ENCODE measurements at regions of chr14 and their contacts with region 1.

Region 1: GRCh38 chr14:24146978-24147760 is at the start of gene RNF31:
- DNase-seq: peak; percentile 92
- ATAC-seq: peak; percentile 93
- H3K4me3 ChIP-seq: peak within 1 kb of the TSS; percentile 82
- H3K27ac ChIP-seq: peak within 1 kb of the TSS; percentile 94
- H3K4me1 ChIP-seq: peaks cover 11% of the 10 kb centered on the region
- H3K27me3 ChIP-seq: no peaks in the 10 kb centered on the region
- CTCF ChIP-seq: no peak
- EP300 ChIP-seq: no peak
- POLR2A ChIP-seq: peak; percentile 28
- RAD21 ChIP-seq: no peak
- polyA plus RNA-seq, gene RNF31: 8.5 to 19.0 TPM

Region 2: GRCh38 chr14:24080888-24081738 is 66.1 kb before region 1 on chr14:
- CTCF ChIA-PET with region 1: interaction called, 4 read pairs
- POLR2A ChIA-PET with region 1: interaction called, 10 read pairs
- RAD21 ChIA-PET with region 1: no interaction called
- SMC1A ChIA-PET with region 1: no interaction called
- in situ Hi-C with region 1: no loop called
- intact Hi-C with region 1: no loop called
- DNase-seq: no peak
- ATAC-seq: peak; percentile 95
- H3K4me3 ChIP-seq: peak overlapping the region; percentile 63; the same call in 1 of the 2 replicates
- H3K27ac ChIP-seq: peak overlapping the region; percentile 67
- H3K4me1 ChIP-seq: peaks cover 14% of the 10 kb centered on the region
- H3K27me3 ChIP-seq: no peaks in the 10 kb centered on the region
- CTCF ChIP-seq: no peak
- EP300 ChIP-seq: no peak
- POLR2A ChIP-seq: peak; percentile 77
- RAD21 ChIP-seq: no peak

Region 3: DNA sequence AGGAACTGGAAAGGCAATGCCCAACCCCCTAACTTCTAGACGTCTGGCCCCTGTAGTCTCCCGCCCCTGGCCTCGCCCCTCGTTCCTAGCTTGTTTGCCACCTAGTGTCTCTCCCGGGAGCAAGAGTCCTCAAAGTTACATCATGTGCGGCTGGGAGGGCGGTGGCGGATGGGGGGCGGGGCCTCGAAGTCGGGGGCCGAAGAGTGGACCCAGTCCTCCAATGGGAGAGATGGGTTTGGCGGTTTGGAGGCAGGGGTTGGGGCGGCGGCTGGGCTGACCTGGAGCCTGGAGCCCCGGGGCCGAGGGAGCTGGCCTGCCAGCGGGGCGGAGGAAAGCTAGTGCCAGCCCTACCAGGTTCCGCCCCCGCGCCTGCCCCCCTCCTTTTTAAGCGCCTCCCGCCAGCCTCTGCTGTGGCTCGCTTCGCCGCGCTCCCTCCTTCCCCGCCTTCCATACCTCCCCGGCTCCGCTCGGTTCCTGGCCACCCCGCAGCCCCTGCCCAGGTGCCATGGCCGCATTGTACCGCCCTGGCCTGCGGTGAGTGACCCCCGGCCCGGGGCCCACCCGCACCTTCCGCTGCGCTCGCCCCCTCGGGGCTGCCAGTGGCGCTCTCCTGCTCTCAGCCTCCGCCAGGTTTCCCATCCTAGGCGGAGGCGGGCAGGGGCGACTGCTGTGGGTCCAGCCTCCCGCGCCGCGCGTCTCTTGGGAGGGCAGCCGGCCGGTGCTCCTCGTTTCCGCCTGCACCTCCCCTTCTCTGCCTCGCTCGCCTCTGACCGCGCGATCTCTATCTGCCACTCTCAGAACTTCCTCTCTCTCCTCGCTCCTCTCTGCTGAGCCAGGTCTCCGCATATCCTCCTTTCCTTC is 53.0 kb before region 1 on chr14 and contains the start of gene PCK2:
- CTCF ChIA-PET with region 1: interaction called, 9 read pairs
- POLR2A ChIA-PET with region 1: interaction called, 38 read pairs
- RAD21 ChIA-PET with region 1: interaction called, 22 read pairs
- SMC1A ChIA-PET with region 1: interaction called, 18 read pairs
- in situ Hi-C with region 1: no loop called
- intact Hi-C with region 1: no loop called
- DNase-seq: no peak
- ATAC-seq: peak; percentile 79
- H3K4me3 ChIP-seq: peak within 1 kb of the TSS; percentile 98
- H3K27ac ChIP-seq: peak within 1 kb of the TSS; percentile 99
- H3K4me1 ChIP-seq: 0 out of 2 replicates have a peak, but pooled peaks cover 3% of the 10 kb centered on the region
- H3K27me3 ChIP-seq: no peaks in the 10 kb centered on the region
- CTCF ChIP-seq: no peak
- EP300 ChIP-seq: no peak
- POLR2A ChIP-seq: peak; percentile 91
- RAD21 ChIP-seq: no peak
- polyA plus RNA-seq, gene PCK2: 6.6 to 12.3 TPM

Region 4: GRCh38 chr14:24123508-24124417 is 23.4 kb before region 1 on chr14:
- CTCF ChIA-PET with region 1: no interaction called
- POLR2A ChIA-PET with region 1: interaction called, 12 read pairs
- RAD21 ChIA-PET with region 1: interaction called, 3 read pairs
- SMC1A ChIA-PET with region 1: interaction called, 4 read pairs
- in situ Hi-C with region 1: no loop called
- intact Hi-C with region 1: no loop called
- DNase-seq: no peak
- ATAC-seq: peak; percentile 92
- H3K4me3 ChIP-seq: no peak overlapping the region
- H3K27ac ChIP-seq: peak overlapping the region; percentile 78
- H3K4me1 ChIP-seq: peaks cover 25% of the 10 kb centered on the region
- H3K27me3 ChIP-seq: no peaks in the 10 kb centered on the region
- CTCF ChIP-seq: no peak
- EP300 ChIP-seq: no peak
- POLR2A ChIP-seq: peak; percentile 43; the same call in 1 of the 2 replicates
- RAD21 ChIP-seq: no peak

Region 5: GRCh38 chr14:24135834-24136542 is 11.2 kb before region 1 on chr14 and contains the start of gene PSME1:
- CTCF ChIA-PET with region 1: interaction called, 16 read pairs
- POLR2A ChIA-PET with region 1: interaction called, 84 read pairs
- RAD21 ChIA-PET with region 1: interaction called, 37 read pairs
- SMC1A ChIA-PET with region 1: interaction called, 18 read pairs
- in situ Hi-C with region 1: no loop called
- intact Hi-C with region 1: no loop called
- DNase-seq: peak; percentile 75
- ATAC-seq: peak; percentile 94
- H3K4me3 ChIP-seq: peak within 1 kb of the TSS; percentile 99
- H3K27ac ChIP-seq: peak within 1 kb of the TSS; percentile 95
- H3K4me1 ChIP-seq: peaks cover 40% of the 10 kb centered on the region
- H3K27me3 ChIP-seq: no peaks in the 10 kb centered on the region
- CTCF ChIP-seq: no peak
- EP300 ChIP-seq: no peak
- POLR2A ChIP-seq: peak; percentile 86
- RAD21 ChIP-seq: no peak
- polyA plus RNA-seq, gene PSME1: 1,299 to 1,378 TPM

Region 6: GRCh38 chr14:24188251-24189058 is 41.3 kb after region 1 on chr14 and contains the start of gene IPO4:
- CTCF ChIA-PET with region 1: no interaction called
- POLR2A ChIA-PET with region 1: interaction called, 10 read pairs
- RAD21 ChIA-PET with region 1: interaction called, 4 read pairs
- SMC1A ChIA-PET with region 1: interaction called, 6 read pairs
- in situ Hi-C with region 1: no loop called
- intact Hi-C with region 1: no loop called
- DNase-seq: peak; percentile 88
- ATAC-seq: peak; percentile 94
- H3K4me3 ChIP-seq: peak within 1 kb of the TSS; percentile 79
- H3K27ac ChIP-seq: peak within 1 kb of the TSS; percentile 34
- H3K4me1 ChIP-seq: 0 out of 2 replicates have a peak, but pooled peaks cover 4% of the 10 kb centered on the region
- H3K27me3 ChIP-seq: no peaks in the 10 kb centered on the region
- CTCF ChIP-seq: no peak
- EP300 ChIP-seq: peak in 1 of 2 experiments; percentile 70; a peak in 2 of 4 replicates
- POLR2A ChIP-seq: peak; percentile 94
- RAD21 ChIP-seq: no peak
- polyA plus RNA-seq, gene IPO4: 7.8 to 10.3 TPM

Region 7: DNA sequence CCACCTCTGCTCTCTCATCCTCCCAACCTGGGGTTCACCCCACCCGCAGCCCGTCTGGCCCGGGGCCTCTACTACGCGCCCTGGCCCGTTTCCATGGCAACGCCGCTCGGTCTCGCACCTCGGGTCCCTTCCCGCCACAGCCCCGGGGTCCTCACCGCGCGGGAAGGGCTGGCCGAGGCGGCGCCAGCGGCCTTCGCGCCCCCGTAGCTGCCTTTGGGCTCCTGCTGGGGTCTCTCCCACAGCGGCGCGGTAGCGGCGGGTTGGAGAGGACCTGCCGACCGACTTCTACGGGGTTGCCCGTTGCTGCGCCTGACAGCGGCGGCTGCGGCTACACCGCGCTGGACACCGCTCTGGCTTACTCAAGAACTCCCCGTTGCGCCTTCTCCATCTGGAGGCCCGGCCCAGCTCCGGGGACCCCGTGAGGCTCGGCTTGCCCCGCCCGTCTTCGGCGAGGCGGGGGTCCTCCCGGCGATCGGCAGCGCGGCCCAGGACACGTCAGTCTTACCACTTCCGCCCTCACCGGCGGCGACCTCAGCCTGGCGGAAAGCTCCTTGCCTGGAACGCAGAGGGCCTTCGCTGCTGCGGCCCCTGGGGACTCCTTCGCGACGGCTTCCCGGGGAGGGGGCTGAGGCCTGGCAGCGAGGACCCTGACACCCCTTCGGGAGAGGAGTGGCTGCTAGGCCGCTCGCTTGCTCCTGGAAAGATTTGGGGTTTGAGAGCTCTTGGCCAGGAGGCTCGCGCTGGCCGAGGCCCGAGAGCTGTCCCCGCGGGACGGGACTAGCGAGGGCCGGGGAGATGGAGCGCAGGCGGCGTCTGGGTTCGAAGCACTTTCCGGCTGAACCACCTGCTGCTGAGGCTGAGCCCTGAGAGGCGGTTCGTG is 48.3 kb after region 1 on chr14 and contains the start of gene TM9SF1:
- CTCF ChIA-PET with region 1: no interaction called
- POLR2A ChIA-PET with region 1: interaction called, 17 read pairs
- RAD21 ChIA-PET with region 1: interaction called, 7 read pairs
- SMC1A ChIA-PET with region 1: no interaction called
- in situ Hi-C with region 1: no loop called
- intact Hi-C with region 1: no loop called
- DNase-seq: peak; percentile 52
- ATAC-seq: peak; percentile 93
- H3K4me3 ChIP-seq: peak within 1 kb of the TSS; percentile 68
- H3K27ac ChIP-seq: peak within 1 kb of the TSS; percentile 96
- H3K4me1 ChIP-seq: peaks cover 15% of the 10 kb centered on the region
- H3K27me3 ChIP-seq: no peaks in the 10 kb centered on the region
- CTCF ChIP-seq: no peak
- EP300 ChIP-seq: no peak
- POLR2A ChIP-seq: peak; percentile 95
- RAD21 ChIP-seq: no peak
- polyA plus RNA-seq, gene TM9SF1: 7.2 to 9.8 TPM

Measured in GM12878 (cell line).